ENCODE measurements at regions of chr7 and their contacts with region 1.

Region 1: DNA sequence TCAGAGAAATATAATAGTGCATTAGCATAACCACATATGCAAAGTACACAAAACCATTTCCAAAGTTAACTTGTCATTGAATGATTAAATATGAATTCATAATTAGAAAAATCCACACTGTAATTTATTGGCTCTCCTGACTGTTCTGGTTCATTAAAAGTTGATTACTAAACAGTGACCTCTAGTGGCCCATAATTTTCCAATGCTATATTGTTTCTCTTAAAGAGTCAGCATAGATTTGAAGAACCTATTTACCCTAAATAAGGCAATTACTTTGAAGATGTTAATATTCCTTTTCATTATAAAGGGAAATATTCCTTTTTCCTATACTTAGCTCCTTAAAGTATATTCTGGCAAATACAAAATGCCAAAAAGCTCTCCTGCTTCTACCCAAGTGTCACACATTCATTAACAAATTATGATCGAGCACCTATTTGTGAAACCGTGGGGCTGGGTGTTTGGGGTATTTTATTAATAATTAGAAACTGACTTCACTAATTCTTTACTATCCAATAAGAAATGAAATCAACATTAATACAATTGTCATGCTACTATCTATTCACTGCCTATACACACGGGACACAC is 86.2 kb downstream of the HIBADH start:
- DNase-seq: no peak
- H3K4me3 ChIP-seq: no peak overlapping the region
- H3K27ac ChIP-seq: no peak overlapping the region
- H3K4me1 ChIP-seq: no peaks in the 10 kb centered on the region
- H3K27me3 ChIP-seq: no peaks in the 10 kb centered on the region
- CTCF ChIP-seq: peak in 2 of 3 experiments; percentile 34 to 35

Region 2: DNA sequence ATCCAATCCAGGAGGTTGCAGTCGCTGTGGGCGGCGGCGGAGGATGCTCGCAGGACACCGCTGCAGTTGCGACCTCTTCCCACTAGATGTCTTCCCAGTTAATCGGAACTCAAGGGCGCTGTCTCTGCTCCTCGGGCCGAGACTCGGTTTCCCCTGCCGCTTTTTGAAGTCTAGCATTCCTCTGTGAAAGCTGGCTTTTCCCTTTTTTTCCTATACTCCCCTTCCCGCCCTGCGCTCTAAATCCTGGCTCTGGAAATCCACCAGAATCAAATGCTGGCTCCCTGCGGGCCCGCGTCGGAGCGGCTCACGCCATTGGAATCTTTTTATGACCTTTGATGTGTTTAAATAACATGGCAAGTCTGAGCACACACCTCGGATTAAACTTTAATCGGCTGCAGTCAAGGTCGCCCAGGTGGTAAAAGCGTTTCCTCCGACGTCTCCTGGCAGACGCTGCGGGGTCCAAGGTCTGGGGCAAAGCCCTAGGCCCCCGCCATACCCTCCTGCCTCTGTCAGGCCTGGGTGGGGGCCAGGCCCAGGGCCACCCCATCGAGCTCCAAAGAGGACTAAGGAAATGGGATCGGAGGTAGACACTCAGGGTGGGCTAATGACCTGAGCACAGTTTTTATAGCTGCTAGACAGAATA is 365.9 kb before region 1 on chr7:
- dilution Hi-C with region 1: loop called (anchors 25 kb)
- DNase-seq: no peak
- H3K4me3 ChIP-seq: peak overlapping the region in 2 of 3 experiments; percentile 11 to 56
- H3K27ac ChIP-seq: no peak overlapping the region
- H3K4me1 ChIP-seq: peaks cover 5% of the 10 kb centered on the region
- H3K27me3 ChIP-seq: peaks cover 88% of the 10 kb centered on the region
- CTCF ChIP-seq: peak; percentile 77 to 91 (median 89)

Region 3: GRCh38 chr7:27520815-27521790 is 55.3 kb before region 1 on chr7:
- dilution Hi-C with region 1: no loop called
- DNase-seq: no peak
- H3K4me3 ChIP-seq: no peak overlapping the region
- H3K27ac ChIP-seq: no peak overlapping the region
- H3K4me1 ChIP-seq: peaks cover under 1% of the 10 kb centered on the region
- H3K27me3 ChIP-seq: no peaks in the 10 kb centered on the region
- CTCF ChIP-seq: no peak

Measured in keratinocyte (primary cell).